H1 (cell line): ENCODE measurements at regions of chr15 and their contacts with region 1.

Region 1: GRCh38 chr15:31128919-31129768 is 27.6 kb upstream of the TRPM1 start:
- DNase-seq: peak; percentile 47 to 97
- H3K4me3 ChIP-seq: no peak overlapping the region
- H3K27ac ChIP-seq: no peak overlapping the region
- H3K4me1 ChIP-seq: no peaks in the 10 kb centered on the region; a peak in 3 of 7 replicates
- H3K27me3 ChIP-seq: no peaks in the 10 kb centered on the region
- CTCF ChIP-seq: peak; percentile 87 to 92 (median 89)
- EP300 ChIP-seq: no peak
- POLR2A ChIP-seq: no peak
- RAD21 ChIP-seq: peak; percentile 94 to 98

Region 2: DNA sequence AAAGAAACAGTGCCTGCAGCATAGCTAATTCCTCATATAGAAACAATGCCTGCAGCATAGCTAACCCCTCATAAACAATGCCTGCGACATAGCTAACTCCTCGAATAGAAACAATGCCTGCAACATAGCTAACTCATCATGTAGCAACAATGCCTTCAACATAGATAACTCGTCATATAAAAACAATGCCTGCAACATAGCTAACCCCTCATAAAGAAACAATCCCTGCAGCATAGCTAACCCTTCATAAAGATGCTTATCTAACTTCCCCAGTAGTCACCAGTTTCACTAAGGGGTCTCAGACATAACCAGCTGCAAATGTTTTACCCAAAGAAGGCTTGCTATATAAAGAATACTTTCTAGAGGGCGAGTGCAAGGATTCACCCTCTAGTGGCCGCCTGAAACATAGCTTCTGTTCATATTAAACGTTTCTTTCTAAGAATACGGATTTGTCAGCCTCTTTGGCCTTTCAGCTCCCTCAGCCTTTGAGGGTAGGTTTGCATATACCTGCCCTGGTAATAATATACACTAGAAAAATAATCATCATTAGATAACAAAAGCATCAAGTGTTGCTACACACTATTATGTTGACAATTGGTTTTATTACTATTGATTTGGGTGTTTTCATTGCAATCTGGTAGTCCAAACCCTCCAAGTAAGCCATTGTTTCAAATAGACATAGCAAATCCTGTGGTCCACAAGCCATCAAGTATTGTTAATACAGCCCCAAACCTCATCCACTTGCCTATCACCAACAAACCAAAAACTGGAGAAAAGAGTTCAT is 269.9 kb before region 1 on chr15:
- CTCF ChIA-PET with region 1: interaction called, 11 read pairs
- POLR2A ChIA-PET with region 1: no interaction called
- DNase-seq: no peak
- H3K4me3 ChIP-seq: no peak overlapping the region
- H3K27ac ChIP-seq: no peak overlapping the region
- H3K4me1 ChIP-seq: peaks cover 0 to 3% (median 1%) of the 10 kb centered on the region in 4 experiments; a peak in 2 of 7 replicates
- H3K27me3 ChIP-seq: no peaks in the 10 kb centered on the region
- CTCF ChIP-seq: peak in 2 of 3 experiments; percentile 49 to 71; a peak in 2 of 4 replicates
- EP300 ChIP-seq: no peak
- POLR2A ChIP-seq: no peak
- RAD21 ChIP-seq: peak; percentile 38 to 51; a peak in 3 of 4 replicates

Region 3: DNA sequence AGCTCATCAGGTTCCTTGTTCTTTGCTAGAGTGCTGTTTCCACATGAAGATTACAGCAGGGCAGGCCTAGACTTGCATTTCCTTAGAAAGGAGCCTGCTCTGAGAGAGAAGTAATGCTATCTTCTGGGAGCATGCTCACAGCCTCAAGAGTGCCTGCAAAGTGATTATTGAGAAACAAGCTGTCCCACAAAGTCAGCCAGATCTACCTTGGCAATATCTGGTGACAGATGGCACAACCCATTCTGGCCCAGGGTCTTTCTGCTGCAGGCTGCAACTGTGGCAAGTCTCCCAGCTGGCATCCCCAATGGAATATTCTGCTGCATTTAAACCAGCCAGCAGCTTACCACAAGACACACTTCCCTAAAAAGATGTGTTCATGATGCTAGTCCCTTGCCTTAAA is 167.1 kb before region 1 on chr15:
- CTCF ChIA-PET with region 1: interaction called, 14 read pairs
- POLR2A ChIA-PET with region 1: no interaction called
- DNase-seq: no peak
- H3K4me3 ChIP-seq: no peak overlapping the region
- H3K27ac ChIP-seq: no peak overlapping the region
- H3K4me1 ChIP-seq: no peaks in the 10 kb centered on the region
- H3K27me3 ChIP-seq: no peaks in the 10 kb centered on the region
- CTCF ChIP-seq: no peak
- EP300 ChIP-seq: no peak
- POLR2A ChIP-seq: no peak
- RAD21 ChIP-seq: no peak

Region 4: GRCh38 chr15:31081588-31082250 is 47.4 kb before region 1 on chr15:
- CTCF ChIA-PET with region 1: interaction called, 11 read pairs
- POLR2A ChIA-PET with region 1: no interaction called
- DNase-seq: no peak
- H3K4me3 ChIP-seq: no peak overlapping the region
- H3K27ac ChIP-seq: no peak overlapping the region
- H3K4me1 ChIP-seq: peaks cover 3 to 35% (median 20%) of the 10 kb centered on the region in 4 experiments
- H3K27me3 ChIP-seq: peaks cover 0 to 2% (median 1%) of the 10 kb centered on the region in 4 experiments; a peak in 3 of 7 replicates
- CTCF ChIP-seq: no peak
- EP300 ChIP-seq: no peak
- POLR2A ChIP-seq: no peak
- RAD21 ChIP-seq: no peak

Region 5: DNA sequence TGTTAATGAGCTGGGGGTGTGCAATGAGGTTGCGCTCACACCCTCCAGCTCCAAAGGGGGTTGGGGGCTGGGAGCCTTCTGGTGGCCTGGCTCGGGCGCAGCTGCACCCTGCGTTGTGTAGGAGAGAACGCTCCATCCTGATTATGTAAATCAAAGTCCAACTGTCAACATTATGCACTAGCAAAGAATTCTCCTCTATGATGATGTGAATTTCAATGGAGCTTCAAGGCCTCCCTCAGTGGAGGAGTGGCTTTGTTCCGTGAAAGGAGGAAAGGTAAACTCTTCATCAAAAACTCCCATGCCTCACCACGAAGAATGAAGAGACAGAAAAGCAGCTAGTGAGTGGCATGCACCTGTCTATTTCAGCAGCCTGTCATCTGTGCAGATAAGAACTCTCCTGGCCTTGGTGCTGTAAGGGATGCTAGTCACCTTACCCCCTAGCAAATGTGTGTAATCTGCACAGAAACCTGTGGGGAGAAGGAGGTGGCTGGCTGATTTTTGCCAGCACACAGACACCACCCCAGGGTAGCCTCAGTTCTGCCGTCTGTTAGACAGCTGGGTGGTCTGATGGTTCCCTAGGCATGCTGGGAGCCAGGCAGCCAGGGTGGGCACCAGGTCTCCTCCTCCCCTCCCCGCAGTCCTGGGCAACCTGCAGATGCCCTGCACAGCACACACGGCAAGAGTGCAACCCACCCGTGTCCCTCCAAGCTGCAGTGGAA is 19.3 kb after region 1 on chr15:
- CTCF ChIA-PET with region 1: interaction called, 15 read pairs
- POLR2A ChIA-PET with region 1: interaction called, 3 read pairs
- DNase-seq: no peak
- H3K4me3 ChIP-seq: no peak overlapping the region
- H3K27ac ChIP-seq: no peak overlapping the region
- H3K4me1 ChIP-seq: peaks cover 5 to 29% (median 23%) of the 10 kb centered on the region in 4 experiments
- H3K27me3 ChIP-seq: no peaks in the 10 kb centered on the region
- CTCF ChIP-seq: no peak
- EP300 ChIP-seq: no peak
- POLR2A ChIP-seq: no peak
- RAD21 ChIP-seq: no peak

Region 6: DNA sequence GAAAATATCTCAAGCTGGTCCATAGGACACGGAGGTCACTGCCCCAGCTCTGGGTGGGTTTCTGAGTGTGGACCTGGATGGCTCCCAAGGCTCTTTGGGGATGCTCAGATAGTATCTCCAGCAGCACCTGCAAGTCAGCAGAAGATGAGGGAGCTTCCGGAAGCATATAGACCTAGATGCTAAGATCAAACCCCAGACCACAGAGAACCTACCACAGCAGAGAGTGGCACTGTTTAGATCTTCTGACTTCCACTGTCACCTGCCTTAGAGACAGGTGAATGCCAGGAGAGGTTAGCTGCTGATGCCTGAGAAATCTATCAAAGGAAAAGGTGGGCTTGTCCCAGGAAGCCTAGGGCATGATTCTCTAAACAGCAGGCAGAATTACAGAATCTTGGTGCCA is 78.1 kb after region 1 on chr15:
- CTCF ChIA-PET with region 1: no interaction called
- POLR2A ChIA-PET with region 1: no interaction called
- DNase-seq: no peak
- H3K4me3 ChIP-seq: no peak overlapping the region
- H3K27ac ChIP-seq: no peak overlapping the region
- H3K4me1 ChIP-seq: no peaks in the 10 kb centered on the region
- H3K27me3 ChIP-seq: no peaks in the 10 kb centered on the region
- CTCF ChIP-seq: no peak
- EP300 ChIP-seq: no peak
- POLR2A ChIP-seq: no peak
- RAD21 ChIP-seq: no peak